Heart left ventricle (tissue), 16 donors: ENCODE measurements at regions of chr17 and their contacts with region 1.

Region 1: GRCh38 chr17:42623732-42624596 is 14.5 kb downstream of the TUBG1 start:
- DNase-seq: no peak
- ATAC-seq: peak in 3 of 4 donors; percentile 32 to 84 (median 71)
- H3K4me3 ChIP-seq: no peak overlapping the region
- H3K27ac ChIP-seq: no peak overlapping the region
- H3K4me1 ChIP-seq: peaks cover 0 to 4% (median under 1%) of the 10 kb centered on the region in 12 donors
- H3K27me3 ChIP-seq: no peaks in the 10 kb centered on the region
- CTCF ChIP-seq: no peak
- POLR2A ChIP-seq: no peak

Region 2: DNA sequence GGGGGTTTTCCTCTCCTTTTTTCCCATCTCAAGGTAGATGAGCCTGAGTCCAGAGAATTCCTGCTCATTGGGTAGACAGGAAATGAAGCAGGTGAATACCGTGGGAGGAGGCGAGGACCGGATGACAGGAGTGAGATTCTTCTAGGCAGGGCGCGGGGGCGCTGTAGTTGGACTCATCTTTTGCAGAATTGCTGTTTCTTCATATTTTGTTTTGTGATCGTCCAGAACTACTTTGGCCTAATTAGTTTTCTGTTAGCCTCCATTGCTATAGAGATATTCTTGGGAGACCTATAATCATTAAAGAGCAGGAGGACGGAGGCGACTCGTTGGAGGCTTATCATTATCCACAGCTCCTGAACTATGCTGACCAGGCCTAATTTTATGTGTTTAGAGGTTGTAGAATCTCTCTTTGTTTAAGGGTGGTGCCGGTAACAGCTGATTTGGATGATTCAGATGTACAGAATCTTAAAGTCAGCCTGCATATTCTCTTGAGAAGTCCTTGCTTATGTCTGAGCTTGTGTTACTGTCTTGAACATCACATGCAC is 164.6 kb before region 1 on chr17:
- intact Hi-C with region 1: no loop called
- DNase-seq: peak in 4 of 5 donors; percentile 38 to 55 (median 45)
- ATAC-seq: peak; percentile 33 to 53 (median 42)
- H3K4me3 ChIP-seq: peak overlapping the region; percentile 43 to 93 (median 80)
- H3K27ac ChIP-seq: peak overlapping the region; percentile 77 to 98 (median 92)
- H3K4me1 ChIP-seq: peaks cover 0 to 73% (median 25%) of the 10 kb centered on the region in 12 donors
- H3K27me3 ChIP-seq: no peaks in the 10 kb centered on the region
- CTCF ChIP-seq: peak in 7 of 12 donors; percentile 6 to 51 (median 42)
- POLR2A ChIP-seq: no peak

Region 3: GRCh38 chr17:42659079-42659931 is 35.3 kb after region 1 on chr17 and contains the start of gene TUBG2:
- intact Hi-C with region 1: loop called in 5 of 10 experiments (anchors 5 kb)
- DNase-seq: peak; percentile 89 to 94 (median 92)
- ATAC-seq: peak; percentile 89 to 97 (median 95)
- H3K4me3 ChIP-seq: peak within 1 kb of the TSS; percentile 54 to 94 (median 74)
- H3K27ac ChIP-seq: peak within 1 kb of the TSS in 11 of 12 donors; percentile 65 to 88 (median 80)
- H3K4me1 ChIP-seq: peaks cover 0 to 26% (median 9%) of the 10 kb centered on the region in 12 donors
- H3K27me3 ChIP-seq: no peaks in the 10 kb centered on the region
- CTCF ChIP-seq: peak in 1 of 12 donors; percentile 10
- POLR2A ChIP-seq: peak in 1 of 2 donors; percentile 77
- total RNA-seq, gene TUBG2: 11.0 to 28.2 (median 16.7) TPM